Left cardiac atrium (tissue), 4 donors: ENCODE measurements at regions of chr5 and their contacts with region 1.

Region 1: GRCh38 chr5:179051784-179052183 is 8.4 kb upstream of the ZNF354C start:
- DNase-seq: no peak
- ATAC-seq: no peak

Region 2: DNA sequence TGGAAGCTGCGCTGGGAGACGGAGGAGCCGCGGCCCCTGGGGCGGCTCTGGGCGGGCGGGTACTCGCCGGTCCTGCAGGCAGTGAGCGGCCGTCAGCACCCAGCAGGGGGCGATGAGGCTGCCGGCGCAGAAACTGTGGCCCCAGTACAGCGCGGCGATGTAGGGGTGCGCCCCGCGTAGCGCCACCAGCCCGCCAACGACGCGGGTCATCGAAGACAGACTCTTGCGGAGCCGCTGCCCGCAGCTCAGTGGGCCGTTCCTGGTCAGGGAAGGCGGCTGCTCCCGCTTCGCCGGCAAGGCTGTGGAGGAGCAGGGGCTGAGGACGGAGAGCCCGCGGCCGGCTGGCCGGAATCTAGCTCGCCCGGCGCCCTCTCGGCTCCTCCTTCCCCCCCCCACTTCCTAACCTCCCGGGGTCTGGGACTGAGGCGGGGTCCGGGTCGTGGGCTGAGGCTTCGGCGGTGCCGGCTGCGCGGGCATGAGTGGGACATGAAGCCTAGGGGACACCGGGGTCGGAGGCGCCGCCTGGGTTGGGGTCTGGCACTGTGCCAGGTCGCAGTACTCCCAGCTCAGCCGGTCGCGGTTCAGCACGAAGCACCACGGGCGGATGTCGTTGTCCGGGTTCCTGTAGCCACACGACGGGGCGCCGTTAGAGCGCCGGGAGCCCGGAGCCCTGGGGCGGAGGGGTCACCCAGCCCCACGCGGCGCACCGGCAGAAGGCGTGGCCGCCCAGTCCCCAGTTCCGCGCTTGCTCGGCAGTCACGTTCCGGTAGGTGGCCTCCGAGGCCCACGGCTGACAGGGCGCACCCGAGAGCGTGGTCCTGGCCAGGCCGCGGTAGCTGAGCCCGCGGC is 1647.8 kb before region 1 on chr5:
- intact Hi-C with region 1: no loop called
- DNase-seq: peak; percentile 91
- ATAC-seq: peak; percentile 92 to 95

Region 3: GRCh38 chr5:178695556-178695955 is 356.2 kb before region 1 on chr5:
- intact Hi-C with region 1: no loop called
- DNase-seq: no peak
- ATAC-seq: no peak

Region 4: GRCh38 chr5:178869577-178869976 is 182.2 kb before region 1 on chr5:
- intact Hi-C with region 1: no loop called
- DNase-seq: no peak
- ATAC-seq: peak in 1 of 2 donors; percentile 34

Region 5: DNA sequence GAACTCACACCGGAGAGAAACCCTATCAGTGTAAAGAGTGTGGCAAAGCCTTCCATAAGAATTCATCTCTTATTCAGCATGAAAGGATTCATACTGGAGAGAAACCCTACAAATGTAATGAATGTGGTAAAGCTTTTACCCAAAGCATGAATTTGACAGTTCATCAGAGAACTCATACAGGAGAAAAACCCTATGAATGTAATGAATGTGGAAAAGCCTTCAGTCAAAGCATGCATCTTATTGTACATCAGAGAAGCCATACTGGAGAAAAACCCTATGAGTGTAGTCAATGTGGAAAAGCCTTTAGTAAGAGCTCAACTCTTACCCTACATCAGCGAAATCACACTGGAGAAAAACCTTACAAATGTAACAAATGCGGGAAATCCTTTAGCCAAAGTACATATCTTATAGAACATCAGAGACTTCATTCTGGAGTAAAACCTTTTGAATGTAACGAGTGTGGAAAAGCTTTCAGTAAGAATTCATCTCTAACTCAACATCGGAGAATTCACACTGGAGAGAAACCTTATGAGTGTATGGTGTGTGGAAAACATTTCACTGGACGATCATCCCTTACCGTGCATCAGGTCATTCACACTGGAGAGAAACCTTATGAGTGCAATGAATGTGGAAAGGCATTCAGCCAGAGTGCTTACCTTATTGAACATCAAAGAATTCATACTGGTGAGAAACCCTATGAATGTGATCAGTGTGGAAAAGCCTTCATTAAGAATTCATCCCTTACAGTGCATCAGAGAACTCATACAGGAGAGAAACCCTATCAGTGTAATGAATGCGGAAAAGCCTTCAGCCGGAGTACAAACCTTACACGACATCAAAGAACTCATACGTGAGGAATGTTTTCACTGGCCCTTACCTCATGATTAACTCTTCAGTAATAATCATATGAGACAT is 119.7 kb before region 1 on chr5:
- intact Hi-C with region 1: loop called in 1 of 2 experiments (anchors 10 kb)
- DNase-seq: no peak
- ATAC-seq: no peak

Region 6: GRCh38 chr5:179137643-179138567 is 86.1 kb after region 1 on chr5:
- intact Hi-C with region 1: no loop called
- DNase-seq: peak; percentile 20
- ATAC-seq: peak in 1 of 2 donors; percentile 54